ENCODE measurements at regions of chr11 and their contacts with region 1.

Region 1: DNA sequence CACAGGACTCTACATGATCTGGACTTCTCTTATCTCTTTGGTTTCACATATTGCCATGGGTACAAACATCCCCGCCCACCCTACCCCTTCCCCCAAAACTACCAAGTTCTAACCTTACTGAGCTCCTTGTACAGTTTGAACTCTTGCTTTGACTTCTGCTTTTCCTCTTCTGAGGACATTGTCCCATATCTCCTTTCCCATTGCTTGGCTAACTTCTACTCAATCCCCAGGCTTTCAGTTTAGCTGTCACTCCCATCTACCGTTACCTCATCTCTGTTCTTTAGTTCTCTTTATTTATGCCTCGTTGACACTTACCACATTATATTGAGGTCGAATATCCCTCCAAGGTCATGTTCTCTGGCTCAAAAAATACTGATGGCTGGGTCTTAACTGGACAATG is 393.5 kb upstream of the CADM1 start:
- DNase-seq: no peak
- ATAC-seq: no peak
- H3K4me3 ChIP-seq: no peak overlapping the region
- H3K4me3 Mint-ChIP-seq: no peak overlapping the region
- H3K27ac ChIP-seq: no peak overlapping the region
- H3K27ac Mint-ChIP-seq: no peak overlapping the region
- H3K4me1 ChIP-seq: no peaks in the 10 kb centered on the region
- H3K4me1 Mint-ChIP-seq: peaks cover 0 to under 1% (median 0%) of the 10 kb centered on the region in 7 donors
- H3K27me3 ChIP-seq: no peaks in the 10 kb centered on the region
- H3K27me3 Mint-ChIP-seq: no peaks in the 10 kb centered on the region

Region 2: GRCh38 chr11:115869780-115870431 is 27.8 kb before region 1 on chr11:
- CTCF ChIA-PET with region 1: no interaction called
- POLR2A ChIA-PET with region 1: no interaction called
- intact Hi-C with region 1: loop called in 1 of 2 experiments (anchors 1 kb)
- DNase-seq: no peak
- ATAC-seq: peak; percentile 63
- H3K4me3 ChIP-seq: no peak overlapping the region
- H3K4me3 Mint-ChIP-seq: no peak overlapping the region
- H3K27ac ChIP-seq: no peak overlapping the region
- H3K27ac Mint-ChIP-seq: no peak overlapping the region
- H3K4me1 ChIP-seq: no peaks in the 10 kb centered on the region
- H3K4me1 Mint-ChIP-seq: peaks cover 0 to 7% (median 0%) of the 10 kb centered on the region in 7 donors
- H3K27me3 ChIP-seq: no peaks in the 10 kb centered on the region
- H3K27me3 Mint-ChIP-seq: peaks cover 0 to 21% (median 2%) of the 10 kb centered on the region in 5 donors

Region 3: DNA sequence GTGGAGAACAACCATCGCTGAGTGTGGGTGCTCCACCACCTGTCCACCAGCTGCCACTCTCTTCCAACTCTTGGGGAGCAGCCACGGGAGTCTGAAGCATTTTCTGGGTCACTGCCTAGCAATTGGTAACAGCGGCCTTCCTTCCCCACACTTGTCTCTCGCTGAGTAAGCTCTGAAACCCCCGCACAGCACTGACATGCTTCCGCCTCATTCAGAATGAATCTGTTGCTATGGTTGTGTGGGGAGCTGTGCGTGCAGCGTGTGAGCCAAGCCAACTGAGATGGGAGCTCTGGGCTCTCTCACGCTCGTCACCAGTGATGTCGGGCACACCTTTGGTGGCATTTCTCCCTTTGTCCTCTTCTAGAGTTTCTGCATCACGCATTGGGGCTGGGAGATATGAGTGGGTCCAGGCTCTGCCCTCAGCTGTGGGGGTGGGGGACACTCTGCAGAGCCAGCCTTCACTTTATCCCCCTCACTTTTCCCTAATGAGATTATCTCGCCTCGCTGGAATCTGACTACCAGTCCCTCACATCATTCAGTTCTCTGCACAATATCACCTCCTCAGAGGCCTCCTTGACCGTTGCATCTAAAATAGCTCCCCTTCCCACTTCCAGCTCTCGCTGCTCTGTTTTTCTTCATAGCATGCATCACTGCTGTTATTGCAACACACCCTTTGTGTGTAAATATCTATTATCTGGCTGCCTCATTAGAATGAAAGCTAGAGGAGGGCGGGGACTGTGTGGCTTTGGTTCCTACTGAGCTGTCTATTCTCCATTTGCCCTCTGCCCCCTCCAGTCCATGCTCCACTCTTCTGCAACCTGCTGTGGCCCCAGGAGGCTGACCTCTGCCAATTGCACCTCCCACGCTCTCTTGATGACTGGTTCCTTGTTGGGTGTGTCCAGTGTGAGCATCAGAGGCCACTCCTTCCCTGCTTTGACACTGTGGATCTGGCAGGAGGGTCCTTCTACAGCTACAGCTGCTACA is 176.4 kb after region 1 on chr11:
- CTCF ChIA-PET with region 1: no interaction called
- POLR2A ChIA-PET with region 1: no interaction called
- intact Hi-C with region 1: no loop called
- DNase-seq: no peak
- ATAC-seq: no peak
- H3K4me3 ChIP-seq: no peak overlapping the region
- H3K4me3 Mint-ChIP-seq: no peak overlapping the region
- H3K27ac ChIP-seq: no peak overlapping the region
- H3K27ac Mint-ChIP-seq: no peak overlapping the region
- H3K4me1 ChIP-seq: no peaks in the 10 kb centered on the region
- H3K4me1 Mint-ChIP-seq: no peaks in the 10 kb centered on the region
- H3K27me3 ChIP-seq: no peaks in the 10 kb centered on the region
- H3K27me3 Mint-ChIP-seq: peaks cover 2 to 29% (median 17%) of the 10 kb centered on the region in 5 donors

Measured in naive thymus-derived CD4-positive, alpha-beta T cell (primary cell).